ENCODE measurements at regions of chr9 and their contacts with region 1.

Region 1: GRCh38 chr9:86948074-86948929 is 996 bp upstream of the GAS1 start:
- DNase-seq: peak; percentile 84

Region 2: GRCh38 chr9:86354011-86354817 is 594.1 kb before region 1 on chr9 and contains the start of gene TUT7:
- intact Hi-C with region 1: loop called (anchors 5 kb)
- DNase-seq: peak; percentile 99
- total RNA-seq, gene TUT7: 14.6 TPM

Region 3: DNA sequence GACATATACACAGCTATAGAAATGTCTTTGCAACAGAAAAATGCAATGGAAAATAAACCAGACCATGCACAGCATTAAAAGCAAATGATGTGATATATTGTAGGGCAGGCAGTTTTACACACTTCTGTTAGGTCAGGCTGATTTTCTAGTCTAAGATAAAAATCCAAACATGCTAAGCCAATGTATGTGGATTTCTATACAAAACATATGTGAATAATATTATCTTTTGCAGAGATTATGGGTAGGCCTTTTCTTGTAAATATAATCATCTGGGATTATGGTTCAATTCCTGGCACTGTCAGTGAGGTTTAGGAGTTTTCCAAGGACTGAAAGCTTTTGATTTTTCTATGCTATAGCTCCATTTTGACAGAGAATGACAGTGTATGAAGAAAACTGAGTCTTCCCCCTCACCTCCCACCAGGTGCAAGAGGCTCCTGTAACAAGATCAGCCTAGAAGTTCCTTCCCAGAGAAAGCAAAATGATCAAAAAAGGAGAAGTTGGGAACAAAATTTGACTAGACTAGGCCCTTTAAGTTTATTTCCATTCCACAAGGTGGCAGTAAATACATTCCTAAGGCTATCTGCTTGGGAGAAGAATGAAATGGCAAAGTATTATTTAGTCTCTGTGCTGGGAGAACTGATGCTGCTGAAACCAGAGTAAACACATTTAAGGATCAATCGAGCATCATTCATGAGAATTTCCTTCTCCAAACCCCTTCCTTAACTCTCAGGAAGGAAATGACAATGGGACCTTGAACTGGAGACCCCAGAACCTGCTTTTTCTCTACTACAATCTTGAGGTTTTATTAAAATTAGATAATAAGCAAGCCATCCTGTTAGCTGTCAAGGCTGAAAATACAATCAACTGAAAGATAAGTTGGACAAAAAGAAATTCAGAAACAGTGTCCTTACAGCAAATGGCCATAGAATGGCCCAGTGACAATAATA is 461.1 kb before region 1 on chr9:
- intact Hi-C with region 1: loop called (anchors 10 kb)
- DNase-seq: no peak

Region 4: GRCh38 chr9:86721843-86722711 is 226.2 kb before region 1 on chr9:
- intact Hi-C with region 1: loop called (anchors 10 kb)
- DNase-seq: no peak

Region 5: DNA sequence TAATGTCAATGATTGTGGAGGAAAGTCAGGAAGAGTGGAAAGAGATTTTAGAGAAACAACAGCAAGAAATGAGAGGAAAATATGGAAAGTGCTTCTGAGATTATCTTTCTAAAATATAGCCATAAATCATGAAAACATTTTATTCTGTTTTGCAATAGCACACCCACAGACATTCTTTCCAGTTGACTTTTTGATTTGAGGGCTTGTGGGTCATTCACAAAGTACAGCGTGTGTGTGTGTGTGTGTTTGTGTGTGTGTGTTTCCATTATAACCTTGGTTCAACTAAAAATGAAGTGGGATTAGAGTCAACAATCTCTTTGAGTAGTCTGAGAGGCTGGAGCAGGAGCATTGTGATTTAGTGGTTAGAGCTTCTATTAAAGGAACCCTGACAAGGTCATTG is 115.6 kb after region 1 on chr9:
- intact Hi-C with region 1: loop called (anchors 10 kb)
- DNase-seq: no peak

Region 6: DNA sequence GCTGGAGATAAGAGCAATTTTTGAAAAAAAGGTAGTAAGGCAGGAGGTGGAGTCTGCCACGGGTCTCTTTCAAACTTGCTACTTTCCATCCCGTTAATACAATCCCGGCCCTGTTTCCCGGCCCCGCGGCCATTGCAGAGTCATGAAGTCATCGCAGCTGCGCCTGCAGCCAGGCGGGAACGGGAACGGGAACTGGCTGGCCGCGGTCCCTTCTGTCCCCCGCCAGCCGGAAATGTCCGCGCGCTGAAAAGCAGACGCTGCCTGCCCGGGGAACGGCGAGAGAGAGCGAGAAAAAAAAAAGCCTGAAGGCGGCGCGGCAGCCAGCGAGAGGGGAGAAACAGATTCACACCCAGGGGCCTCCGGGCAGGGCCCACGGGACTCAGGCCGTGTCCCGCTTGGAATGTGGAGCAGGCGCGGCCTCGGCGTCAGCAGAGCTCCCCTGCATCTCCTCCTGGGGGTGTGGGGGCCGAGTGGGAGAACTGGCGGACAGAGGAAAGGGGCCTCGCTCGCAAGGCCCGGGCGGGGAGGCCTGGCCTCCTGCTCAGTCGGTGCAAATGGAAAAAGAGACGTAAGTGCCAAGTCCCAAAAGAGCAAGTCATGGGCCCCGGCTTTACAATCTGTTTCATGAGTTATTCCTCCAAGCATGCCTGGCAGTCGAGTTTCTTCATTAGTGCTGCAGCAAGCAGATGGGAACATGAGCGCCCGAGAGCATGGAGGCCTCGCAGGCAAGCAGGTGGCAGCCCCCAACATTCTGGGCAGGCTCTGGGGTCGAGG is 200.2 kb after region 1 on chr9:
- intact Hi-C with region 1: loop called (anchors 2 kb)
- DNase-seq: peak; percentile 91

Region 7: DNA sequence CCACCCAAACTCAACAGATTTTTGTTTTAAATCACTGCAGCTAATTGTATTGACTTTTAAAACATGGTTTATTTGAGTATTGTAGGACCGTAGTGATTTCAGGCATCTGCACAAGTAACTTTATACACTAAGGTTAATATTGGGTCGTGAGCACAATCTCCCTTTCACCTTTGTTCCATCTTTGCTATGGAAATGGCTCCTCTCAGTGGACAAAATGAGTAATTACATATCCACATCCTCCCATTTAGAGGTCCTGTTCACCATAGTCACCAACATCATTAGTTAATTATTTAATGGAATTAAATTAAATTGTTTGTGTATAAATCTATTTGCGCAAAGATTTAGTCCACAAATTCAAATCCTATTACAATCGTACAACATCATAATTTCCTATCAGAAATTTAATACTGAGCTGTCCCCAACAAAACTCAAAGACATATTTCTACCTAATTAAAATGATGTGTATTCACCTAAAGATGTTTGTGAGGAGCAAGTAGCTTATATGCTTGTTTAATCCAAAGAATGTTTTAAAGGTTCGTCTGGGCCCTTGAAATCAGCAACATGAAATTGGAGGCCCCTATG is 376.4 kb after region 1 on chr9:
- intact Hi-C with region 1: loop called (anchors 5 kb)
- DNase-seq: no peak